Activated B cell treated with CpG ODN at 0.5 μM for 24 hours (primary cell): ENCODE measurements at regions of chr11 and their contacts with region 1.

Region 1: GRCh38 chr11:8033305-8034105 is 46.4 kb downstream of the EIF3F start:
- DNase-seq: peak; percentile 36
- ATAC-seq: peak; percentile 75
- H3K4me3 Mint-ChIP-seq: no peak overlapping the region
- H3K27ac Mint-ChIP-seq: no peak overlapping the region
- H3K4me1 Mint-ChIP-seq: peaks cover 6% of the 10 kb centered on the region
- H3K27me3 Mint-ChIP-seq: peaks cover 29% of the 10 kb centered on the region
- CTCF ChIP-seq: peak; percentile 44

Region 2: GRCh38 chr11:7793233-7793632 is 240.3 kb before region 1 on chr11:
- CTCF ChIA-PET with region 1: no interaction called
- POLR2A ChIA-PET with region 1: no interaction called
- intact Hi-C with region 1: no loop called
- DNase-seq: no peak
- ATAC-seq: no peak
- H3K4me3 Mint-ChIP-seq: no peak overlapping the region
- H3K27ac Mint-ChIP-seq: no peak overlapping the region
- H3K4me1 Mint-ChIP-seq: no peaks in the 10 kb centered on the region
- H3K27me3 Mint-ChIP-seq: peaks cover 7% of the 10 kb centered on the region
- CTCF ChIP-seq: no peak

Region 3: GRCh38 chr11:8043756-8044155 is 10.3 kb after region 1 on chr11:
- CTCF ChIA-PET with region 1: interaction called, 11 read pairs
- POLR2A ChIA-PET with region 1: no interaction called
- intact Hi-C with region 1: no loop called
- DNase-seq: no peak
- ATAC-seq: no peak
- H3K4me3 Mint-ChIP-seq: no peak overlapping the region
- H3K27ac Mint-ChIP-seq: no peak overlapping the region
- H3K4me1 Mint-ChIP-seq: no peaks in the 10 kb centered on the region
- H3K27me3 Mint-ChIP-seq: peaks cover 21% of the 10 kb centered on the region
- CTCF ChIP-seq: no peak

Region 4: GRCh38 chr11:8070417-8071115 is 37.1 kb after region 1 on chr11:
- CTCF ChIA-PET with region 1: interaction called, 8 read pairs
- POLR2A ChIA-PET with region 1: no interaction called
- intact Hi-C with region 1: loop called (anchors 1 kb)
- DNase-seq: no peak
- ATAC-seq: peak; percentile 45
- H3K4me3 Mint-ChIP-seq: no peak overlapping the region
- H3K27ac Mint-ChIP-seq: no peak overlapping the region
- H3K4me1 Mint-ChIP-seq: peaks cover 4% of the 10 kb centered on the region
- H3K27me3 Mint-ChIP-seq: peaks cover 26% of the 10 kb centered on the region
- CTCF ChIP-seq: no peak

Region 5: DNA sequence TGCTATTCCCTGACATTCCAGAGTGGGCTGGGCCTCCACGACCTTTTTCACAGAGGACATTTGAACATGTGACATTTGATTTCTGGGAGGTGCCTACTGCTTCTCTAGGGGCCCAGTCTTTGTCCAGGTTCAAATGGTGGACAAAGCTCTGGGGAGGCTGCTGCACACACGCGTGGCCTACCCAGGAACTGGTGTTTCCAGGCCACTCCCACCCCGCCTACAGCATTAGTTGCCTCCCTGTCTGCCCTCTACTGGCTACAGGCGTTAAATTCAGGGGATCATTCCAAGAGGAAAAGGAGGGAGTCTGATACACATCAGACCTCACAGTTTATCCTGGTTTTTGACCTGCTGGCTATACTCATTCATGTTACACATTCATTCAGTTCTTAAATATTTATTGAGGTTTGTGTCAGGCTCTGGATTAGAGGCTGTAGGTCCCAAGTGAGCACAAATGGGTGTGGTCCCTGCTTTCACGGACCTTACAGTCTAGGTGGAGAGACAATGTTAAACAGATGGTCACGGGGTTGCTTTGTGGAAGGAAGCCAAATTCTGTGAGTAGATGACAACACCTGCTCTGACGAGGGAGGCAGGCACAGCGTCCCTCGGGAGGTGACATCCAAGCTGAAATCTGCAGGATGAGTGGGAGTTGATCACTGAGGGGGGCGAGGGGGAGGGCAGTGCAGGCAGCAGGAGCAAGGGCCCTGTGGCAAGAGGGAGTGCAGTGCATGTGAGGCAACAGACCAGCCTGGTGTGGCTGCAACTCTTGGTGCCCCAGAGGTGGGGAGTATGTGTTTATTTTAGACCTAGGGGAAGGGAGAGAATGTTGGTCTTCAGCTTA is 59.3 kb after region 1 on chr11:
- CTCF ChIA-PET with region 1: interaction called, 12 read pairs
- POLR2A ChIA-PET with region 1: no interaction called
- intact Hi-C with region 1: loop called (anchors 2 kb)
- DNase-seq: no peak
- ATAC-seq: peak; percentile 67
- H3K4me3 Mint-ChIP-seq: no peak overlapping the region
- H3K27ac Mint-ChIP-seq: no peak overlapping the region
- H3K4me1 Mint-ChIP-seq: no peaks in the 10 kb centered on the region
- H3K27me3 Mint-ChIP-seq: no peaks in the 10 kb centered on the region
- CTCF ChIP-seq: no peak

Region 6: GRCh38 chr11:8209208-8209807 is 175.8 kb after region 1 on chr11:
- CTCF ChIA-PET with region 1: interaction called, 7 read pairs
- POLR2A ChIA-PET with region 1: no interaction called
- intact Hi-C with region 1: loop called (anchors 1 kb)
- DNase-seq: peak; percentile 65
- ATAC-seq: peak; percentile 55
- H3K4me3 Mint-ChIP-seq: no peak overlapping the region
- H3K27ac Mint-ChIP-seq: peak overlapping the region; percentile 46
- H3K4me1 Mint-ChIP-seq: peaks cover 36% of the 10 kb centered on the region
- H3K27me3 Mint-ChIP-seq: no peaks in the 10 kb centered on the region
- CTCF ChIP-seq: peak; percentile 81